ENCODE measurements at regions of chr13 and their contacts with region 1.

Region 1: GRCh38 chr13:26253787-26254582 is at the start of gene CDK8:
- DNase-seq: peak; percentile 83 to 95 (median 93)
- ATAC-seq: peak; percentile 92
- H3K4me3 ChIP-seq: peak within 1 kb of the TSS; percentile 95
- H3K4me3 Mint-ChIP-seq: peak within 1 kb of the TSS; percentile 83 to 98 (median 94)
- H3K27ac ChIP-seq: peak within 1 kb of the TSS; percentile 85
- H3K27ac Mint-ChIP-seq: peak within 1 kb of the TSS; percentile 82 to 93 (median 90)
- H3K4me1 ChIP-seq: peaks cover 17% of the 10 kb centered on the region in 2 donors
- H3K4me1 Mint-ChIP-seq: peaks cover 25 to 50% (median 41%) of the 10 kb centered on the region in 7 donors
- H3K27me3 ChIP-seq: no peaks in the 10 kb centered on the region
- H3K27me3 Mint-ChIP-seq: peaks cover 0 to 2% (median 0%) of the 10 kb centered on the region in 5 donors
- total RNA-seq, gene CDK8: 9.0 to 14.0 (median 11.6) TPM

Region 2: GRCh38 chr13:24254146-24254841 is 1999.7 kb before region 1 on chr13:
- CTCF ChIA-PET with region 1: no interaction called
- POLR2A ChIA-PET with region 1: no interaction called
- intact Hi-C with region 1: loop called in 1 of 2 experiments (anchors 10 kb)
- DNase-seq: peak in 7 of 9 donors; percentile 59 to 80 (median 68)
- ATAC-seq: peak; percentile 76
- H3K4me3 ChIP-seq: peak overlapping the region; percentile 82
- H3K4me3 Mint-ChIP-seq: peak overlapping the region; percentile 86 to 96 (median 92)
- H3K27ac ChIP-seq: peak overlapping the region; percentile 90
- H3K27ac Mint-ChIP-seq: peak overlapping the region; percentile 86 to 99 (median 95)
- H3K4me1 ChIP-seq: peaks cover 58 to 75% of the 10 kb centered on the region in 2 donors
- H3K4me1 Mint-ChIP-seq: peaks cover 44 to 96% (median 91%) of the 10 kb centered on the region in 7 donors
- H3K27me3 ChIP-seq: no peaks in the 10 kb centered on the region
- H3K27me3 Mint-ChIP-seq: no peaks in the 10 kb centered on the region

Region 3: GRCh38 chr13:24922745-24923591 is 1331.0 kb before region 1 on chr13:
- CTCF ChIA-PET with region 1: no interaction called
- POLR2A ChIA-PET with region 1: no interaction called
- intact Hi-C with region 1: loop called in 1 of 2 experiments (anchors 2 kb)
- DNase-seq: peak; percentile 79 to 93 (median 87)
- ATAC-seq: peak; percentile 100
- H3K4me3 ChIP-seq: peak overlapping the region; percentile 78
- H3K4me3 Mint-ChIP-seq: peak overlapping the region; percentile 89 to 100 (median 98)
- H3K27ac ChIP-seq: peak overlapping the region; percentile 71
- H3K27ac Mint-ChIP-seq: peak overlapping the region; percentile 73 to 95 (median 91)
- H3K4me1 ChIP-seq: no peaks in the 10 kb centered on the region
- H3K4me1 Mint-ChIP-seq: peaks cover 0 to 22% (median 14%) of the 10 kb centered on the region in 7 donors
- H3K27me3 ChIP-seq: no peaks in the 10 kb centered on the region
- H3K27me3 Mint-ChIP-seq: peaks cover 0 to 12% (median 0%) of the 10 kb centered on the region in 5 donors

Region 4: GRCh38 chr13:26221721-26222519 is 32.1 kb before region 1 on chr13 and contains the start of gene RNF6:
- CTCF ChIA-PET with region 1: interaction called, 3 read pairs
- POLR2A ChIA-PET with region 1: interaction called, 41 read pairs
- intact Hi-C with region 1: loop called (anchors 1 kb)
- DNase-seq: peak; percentile 83 to 92 (median 89)
- ATAC-seq: peak; percentile 95
- H3K4me3 ChIP-seq: peak within 1 kb of the TSS; percentile 96
- H3K4me3 Mint-ChIP-seq: peak within 1 kb of the TSS; percentile 95 to 100 (median 100)
- H3K27ac ChIP-seq: peak within 1 kb of the TSS; percentile 97
- H3K27ac Mint-ChIP-seq: peak within 1 kb of the TSS; percentile 93 to 100 (median 100)
- H3K4me1 ChIP-seq: peaks cover 16 to 17% of the 10 kb centered on the region in 2 donors
- H3K4me1 Mint-ChIP-seq: peaks cover 25 to 54% (median 49%) of the 10 kb centered on the region in 7 donors
- H3K27me3 ChIP-seq: no peaks in the 10 kb centered on the region
- H3K27me3 Mint-ChIP-seq: peaks cover 0 to 3% (median 0%) of the 10 kb centered on the region in 5 donors
- total RNA-seq, gene RNF6: 31.0 to 45.6 (median 44.6) TPM

Region 5: DNA sequence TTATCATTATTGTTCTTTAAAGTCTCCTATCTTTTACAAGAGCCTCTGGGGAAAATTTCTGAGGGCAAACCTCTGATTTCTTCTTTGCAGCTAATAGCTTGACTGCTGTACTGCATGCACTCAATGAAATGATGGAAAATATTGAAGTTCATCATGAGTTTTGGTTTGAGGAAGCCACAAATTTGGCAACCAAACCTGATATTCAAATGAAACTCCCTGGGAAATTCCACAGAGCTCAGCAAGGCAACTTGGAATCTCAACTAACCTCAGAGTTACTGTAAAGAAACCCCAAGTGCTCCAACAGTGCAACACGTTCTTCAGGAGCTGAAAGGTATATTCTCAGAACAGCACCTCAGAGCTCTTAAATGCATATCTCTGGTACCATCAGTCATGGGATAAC is 17.7 kb before region 1 on chr13:
- CTCF ChIA-PET with region 1: no interaction called
- POLR2A ChIA-PET with region 1: no interaction called
- intact Hi-C with region 1: no loop called
- DNase-seq: no peak
- ATAC-seq: no peak
- H3K4me3 ChIP-seq: no peak overlapping the region
- H3K4me3 Mint-ChIP-seq: no peak overlapping the region
- H3K27ac ChIP-seq: no peak overlapping the region
- H3K27ac Mint-ChIP-seq: no peak overlapping the region
- H3K4me1 ChIP-seq: no peaks in the 10 kb centered on the region
- H3K4me1 Mint-ChIP-seq: no peaks in the 10 kb centered on the region
- H3K27me3 ChIP-seq: no peaks in the 10 kb centered on the region
- H3K27me3 Mint-ChIP-seq: peaks cover 0 to 15% (median 9%) of the 10 kb centered on the region in 5 donors

Region 6: DNA sequence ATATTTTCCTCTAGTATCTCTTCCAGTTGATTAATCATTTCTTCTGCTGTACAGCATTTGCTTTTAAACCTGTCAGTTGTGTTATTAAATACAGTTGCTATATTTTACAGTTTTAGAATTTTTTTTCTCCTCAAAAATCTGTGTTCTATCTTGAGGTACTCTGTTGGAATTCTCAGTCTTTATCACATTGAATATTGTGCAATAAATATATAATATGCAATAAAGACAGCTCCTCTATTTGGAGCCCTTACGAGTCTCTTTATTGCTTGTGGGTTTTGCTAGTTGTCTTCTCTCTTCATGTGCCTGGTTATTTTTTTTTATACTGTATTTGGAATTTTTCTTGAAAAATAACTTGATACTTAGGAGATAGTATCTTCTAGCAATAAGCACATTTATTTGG is 51.7 kb after region 1 on chr13:
- CTCF ChIA-PET with region 1: no interaction called
- POLR2A ChIA-PET with region 1: no interaction called
- intact Hi-C with region 1: no loop called
- DNase-seq: no peak
- ATAC-seq: no peak
- H3K4me3 ChIP-seq: no peak overlapping the region
- H3K4me3 Mint-ChIP-seq: peak overlapping the region in 3 of 10 donors; percentile 5 to 22 (median 16)
- H3K27ac ChIP-seq: no peak overlapping the region
- H3K27ac Mint-ChIP-seq: peak overlapping the region in 1 of 9 donors; percentile 15
- H3K4me1 ChIP-seq: peaks cover 0 to 11% of the 10 kb centered on the region in 2 donors
- H3K4me1 Mint-ChIP-seq: peaks cover 8 to 79% (median 65%) of the 10 kb centered on the region in 7 donors
- H3K27me3 ChIP-seq: no peaks in the 10 kb centered on the region
- H3K27me3 Mint-ChIP-seq: no peaks in the 10 kb centered on the region

Region 7: GRCh38 chr13:26498656-26499591 is 244.9 kb after region 1 on chr13:
- CTCF ChIA-PET with region 1: interaction called, 3 read pairs
- POLR2A ChIA-PET with region 1: no interaction called
- intact Hi-C with region 1: loop called (anchors 1 to 5 kb)
- DNase-seq: no peak
- ATAC-seq: no peak
- H3K4me3 ChIP-seq: no peak overlapping the region
- H3K4me3 Mint-ChIP-seq: no peak overlapping the region
- H3K27ac ChIP-seq: no peak overlapping the region
- H3K27ac Mint-ChIP-seq: no peak overlapping the region
- H3K4me1 ChIP-seq: no peaks in the 10 kb centered on the region
- H3K4me1 Mint-ChIP-seq: peaks cover 4 to 15% (median 5%) of the 10 kb centered on the region in 7 donors
- H3K27me3 ChIP-seq: no peaks in the 10 kb centered on the region
- H3K27me3 Mint-ChIP-seq: peaks cover 0 to 9% (median 4%) of the 10 kb centered on the region in 5 donors

Region 8: DNA sequence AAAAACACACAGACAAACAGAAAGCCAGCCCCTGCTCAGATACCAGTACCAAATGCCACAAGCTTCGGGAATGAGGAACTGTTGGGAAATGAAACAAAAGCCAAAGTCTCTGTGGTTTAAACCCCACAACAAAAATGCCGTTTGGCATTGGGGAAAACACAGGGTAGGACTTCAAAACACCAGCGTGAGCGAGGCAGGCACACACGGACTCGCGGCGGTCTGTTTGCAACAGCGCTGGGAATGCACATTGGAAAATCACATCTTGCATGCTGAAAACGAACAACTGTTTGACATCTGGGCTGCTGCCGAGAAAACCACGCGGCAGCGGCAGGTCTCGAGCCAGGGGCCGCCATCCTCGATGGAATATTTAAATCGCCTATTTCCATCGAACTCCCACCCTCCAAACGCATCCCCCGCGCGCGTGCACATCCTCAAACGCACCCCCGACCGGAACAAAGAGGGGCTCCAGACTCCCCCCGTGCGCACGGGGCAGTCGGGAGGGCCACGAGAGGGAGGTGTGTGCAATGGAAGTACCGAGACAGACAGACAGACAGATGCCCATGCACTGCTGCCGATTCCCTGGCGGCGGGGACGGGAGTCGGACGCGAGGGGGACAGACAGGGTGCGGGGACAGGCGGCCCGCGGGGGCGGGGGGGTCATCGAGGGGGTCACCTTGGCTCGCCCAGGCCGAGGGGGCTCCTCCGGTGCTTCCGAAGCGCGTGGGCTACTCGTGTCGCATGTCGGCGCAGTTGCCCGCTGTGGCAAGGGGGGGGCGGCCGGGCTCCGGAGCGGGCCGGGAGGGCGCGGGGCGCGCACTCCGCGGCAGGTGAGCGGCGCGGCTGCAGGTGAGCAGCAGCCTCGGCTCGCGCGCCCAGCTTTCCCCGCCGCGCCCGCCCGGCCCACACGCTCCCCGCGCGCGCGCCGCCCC is 506.2 kb after region 1 on chr13 and contains the start of gene GPR12:
- CTCF ChIA-PET with region 1: no interaction called
- POLR2A ChIA-PET with region 1: no interaction called
- intact Hi-C with region 1: no loop called
- DNase-seq: no peak
- ATAC-seq: peak; percentile 3
- H3K4me3 ChIP-seq: no peak within 1 kb of the TSS
- H3K4me3 Mint-ChIP-seq: peak within 1 kb of the TSS; percentile 14 to 86 (median 71)
- H3K27ac ChIP-seq: no peak within 1 kb of the TSS
- H3K27ac Mint-ChIP-seq: no peak within 1 kb of the TSS
- H3K4me1 ChIP-seq: no peaks in the 10 kb centered on the region
- H3K4me1 Mint-ChIP-seq: peaks cover 0 to 28% (median 14%) of the 10 kb centered on the region in 7 donors
- H3K27me3 ChIP-seq: peaks cover 4% of the 10 kb centered on the region in 2 donors
- H3K27me3 Mint-ChIP-seq: peaks cover 58 to 80% (median 68%) of the 10 kb centered on the region in 5 donors
- total RNA-seq, gene GPR12: not detected

Measured in naive thymus-derived CD4-positive, alpha-beta T cell (primary cell).